Heart right ventricle (tissue), 16 donors: ENCODE measurements at regions of chr18 and their contacts with region 1.

Region 1: DNA sequence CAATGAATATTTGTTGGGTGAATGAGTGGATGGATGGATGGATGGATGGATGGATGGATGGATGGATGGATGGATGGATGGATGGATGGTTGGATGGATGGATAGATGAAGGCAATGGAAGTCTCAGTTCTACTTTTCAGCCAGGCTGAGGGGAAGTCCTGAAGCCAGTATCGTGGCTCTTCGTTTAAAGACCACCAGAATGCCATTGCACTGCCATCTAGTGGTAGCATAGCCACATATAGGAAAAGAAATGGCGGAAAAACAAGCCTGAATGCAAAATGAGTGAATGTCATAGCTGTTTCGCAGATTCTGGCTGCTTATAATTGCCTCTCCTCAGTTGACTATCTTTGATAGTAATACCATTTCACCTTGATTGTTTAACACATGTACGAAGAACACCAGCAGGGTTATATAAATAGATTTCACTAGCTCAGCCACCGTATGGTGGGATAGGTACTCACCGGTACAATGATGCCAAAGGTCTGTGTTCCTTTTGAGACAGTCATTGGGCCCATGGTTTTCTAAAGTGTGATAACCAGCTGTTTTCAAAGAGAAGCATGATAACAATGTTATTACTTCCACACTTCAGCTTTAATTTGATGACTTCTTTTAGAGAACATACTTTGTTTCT is 62.3 kb upstream of the GREB1L start:
- DNase-seq: peak in 1 of 2 donors; percentile 56
- ATAC-seq: peak in 7 of 8 donors; percentile 28 to 79 (median 64)
- H3K4me3 ChIP-seq: no peak overlapping the region
- H3K27ac ChIP-seq: no peak overlapping the region
- H3K4me1 ChIP-seq: peaks cover 0 to 5% (median 0%) of the 10 kb centered on the region in 9 donors
- H3K27me3 ChIP-seq: no peaks in the 10 kb centered on the region
- CTCF ChIP-seq: peak; percentile 55 to 79 (median 71)

Region 2: DNA sequence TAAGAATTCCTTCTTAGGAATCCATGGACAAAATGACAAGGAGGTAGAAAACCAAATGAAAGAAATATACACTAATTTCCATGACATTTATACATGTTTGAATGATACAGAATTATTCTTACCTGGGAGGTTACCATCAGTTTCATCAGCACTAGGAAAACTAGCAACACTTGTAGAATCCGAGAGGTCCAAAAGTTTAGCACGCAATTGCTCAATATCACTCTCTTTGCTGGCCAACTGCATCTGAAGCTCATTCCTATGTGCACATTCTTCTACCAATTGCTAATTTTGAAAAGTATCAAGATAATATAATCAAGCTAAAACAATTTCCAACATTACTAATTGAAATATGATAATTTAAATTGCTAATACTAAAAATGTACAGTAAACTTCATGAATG is 212.9 kb before region 1 on chr18:
- intact Hi-C with region 1: loop called in 4 of 10 experiments (anchors 5 to 10 kb)
- DNase-seq: no peak
- ATAC-seq: no peak
- H3K4me3 ChIP-seq: no peak overlapping the region
- H3K27ac ChIP-seq: no peak overlapping the region
- H3K4me1 ChIP-seq: no peaks in the 10 kb centered on the region
- H3K27me3 ChIP-seq: no peaks in the 10 kb centered on the region
- CTCF ChIP-seq: no peak

Region 3: GRCh38 chr18:20971886-20972267 is 207.8 kb before region 1 on chr18:
- intact Hi-C with region 1: loop called in 4 of 10 experiments (anchors 5 to 10 kb)
- DNase-seq: no peak
- ATAC-seq: no peak
- H3K4me3 ChIP-seq: no peak overlapping the region
- H3K27ac ChIP-seq: no peak overlapping the region
- H3K4me1 ChIP-seq: no peaks in the 10 kb centered on the region
- H3K27me3 ChIP-seq: no peaks in the 10 kb centered on the region
- CTCF ChIP-seq: peak in 8 of 9 donors; percentile 19 to 56 (median 43)

Region 4: DNA sequence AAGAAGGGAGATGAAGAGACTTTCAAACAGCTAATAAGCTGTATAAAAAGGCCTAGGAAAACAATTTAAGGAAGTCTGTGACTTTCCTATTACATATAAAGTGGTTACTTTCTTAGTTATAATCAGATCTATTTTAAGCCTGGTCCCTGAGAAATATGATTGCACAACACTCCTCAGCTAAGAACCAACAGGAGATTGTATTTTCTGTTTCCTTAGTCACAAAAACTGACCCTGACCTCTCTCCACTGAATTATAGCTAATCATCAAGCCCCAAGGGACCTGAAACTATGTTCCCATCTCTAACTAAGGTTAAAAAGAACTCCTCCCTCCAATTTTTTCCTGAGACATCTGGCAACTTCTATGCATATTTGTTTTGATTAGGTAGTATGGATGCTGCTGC is 175.0 kb before region 1 on chr18:
- intact Hi-C with region 1: loop called in 1 of 10 experiments (anchors 10 kb)
- DNase-seq: peak in 1 of 2 donors; percentile 45
- ATAC-seq: peak; percentile 80 to 97 (median 92)
- H3K4me3 ChIP-seq: no peak overlapping the region
- H3K27ac ChIP-seq: peak overlapping the region in 9 of 10 donors; percentile 23 to 79 (median 50)
- H3K4me1 ChIP-seq: peaks cover 0 to 25% (median 20%) of the 10 kb centered on the region in 9 donors
- H3K27me3 ChIP-seq: no peaks in the 10 kb centered on the region
- CTCF ChIP-seq: no peak

Region 5: DNA sequence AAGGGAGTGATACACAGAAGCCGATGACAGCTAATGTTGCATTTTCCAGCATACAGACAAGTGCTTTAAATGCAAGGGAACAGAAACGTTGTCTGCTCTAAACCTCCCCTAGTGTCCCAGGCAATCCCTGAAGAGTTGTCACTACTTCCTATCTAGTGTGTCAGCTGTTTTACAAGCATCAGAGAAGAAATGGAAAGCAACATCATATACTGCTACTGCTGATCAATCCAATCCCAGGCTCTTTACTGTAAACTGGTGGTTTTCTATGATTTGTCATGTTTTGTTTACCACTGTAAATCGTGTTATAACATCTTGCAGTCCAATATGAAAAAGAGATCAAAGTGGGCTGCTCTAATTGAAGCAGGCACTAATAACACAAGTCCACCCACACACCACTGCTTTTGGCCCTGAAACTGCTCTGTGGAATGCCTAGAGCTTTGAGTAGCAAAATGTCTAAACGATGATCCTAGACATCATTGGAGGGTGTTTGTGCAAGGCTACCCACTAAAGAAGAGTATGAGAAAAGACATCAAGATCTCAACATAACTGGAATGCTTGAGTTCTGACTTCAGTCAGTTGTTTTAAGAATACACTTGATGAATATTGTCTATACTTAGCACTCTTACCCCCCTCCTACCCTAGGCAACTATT is 50.0 kb before region 1 on chr18:
- intact Hi-C with region 1: loop called in 1 of 10 experiments (anchors 10 kb)
- DNase-seq: no peak
- ATAC-seq: peak in 3 of 8 donors; percentile 44 to 47 (median 44)
- H3K4me3 ChIP-seq: no peak overlapping the region
- H3K27ac ChIP-seq: no peak overlapping the region
- H3K4me1 ChIP-seq: peaks cover 0 to 10% (median 7%) of the 10 kb centered on the region in 9 donors
- H3K27me3 ChIP-seq: no peaks in the 10 kb centered on the region
- CTCF ChIP-seq: no peak

Region 6: DNA sequence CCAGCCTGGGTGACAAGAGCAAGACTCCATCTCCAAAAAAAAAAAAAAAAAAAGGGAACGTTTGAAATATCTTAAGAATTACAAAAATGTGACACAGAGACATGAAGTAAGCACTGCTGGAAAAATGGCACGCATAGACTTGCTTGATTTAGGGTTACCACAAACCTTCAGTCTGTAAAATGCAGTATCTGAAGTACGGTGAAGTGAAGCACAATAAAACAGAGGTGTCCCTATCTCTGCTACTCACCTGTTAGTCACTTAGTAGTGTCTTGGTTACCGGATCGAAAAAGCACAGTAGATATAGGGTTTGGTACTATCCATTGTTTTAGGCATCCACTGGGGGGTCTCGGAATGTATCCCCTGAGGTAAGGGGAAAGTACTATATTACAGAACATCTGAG is 50.7 kb after region 1 on chr18:
- intact Hi-C with region 1: no loop called
- DNase-seq: no peak
- ATAC-seq: no peak
- H3K4me3 ChIP-seq: no peak overlapping the region
- H3K27ac ChIP-seq: no peak overlapping the region
- H3K4me1 ChIP-seq: no peaks in the 10 kb centered on the region
- H3K27me3 ChIP-seq: peaks cover 0 to 3% (median 0%) of the 10 kb centered on the region in 7 donors
- CTCF ChIP-seq: no peak

Region 7: GRCh38 chr18:21303913-21304312 is 124.2 kb after region 1 on chr18:
- intact Hi-C with region 1: no loop called
- DNase-seq: no peak
- ATAC-seq: no peak
- H3K4me3 ChIP-seq: no peak overlapping the region
- H3K27ac ChIP-seq: no peak overlapping the region
- H3K4me1 ChIP-seq: peaks cover 0 to 6% (median 0%) of the 10 kb centered on the region in 9 donors
- H3K27me3 ChIP-seq: no peaks in the 10 kb centered on the region
- CTCF ChIP-seq: no peak